Lower leg skin (tissue), 4 donors: ENCODE measurements at regions of chr22 and their contacts with region 1.

Region 1: DNA sequence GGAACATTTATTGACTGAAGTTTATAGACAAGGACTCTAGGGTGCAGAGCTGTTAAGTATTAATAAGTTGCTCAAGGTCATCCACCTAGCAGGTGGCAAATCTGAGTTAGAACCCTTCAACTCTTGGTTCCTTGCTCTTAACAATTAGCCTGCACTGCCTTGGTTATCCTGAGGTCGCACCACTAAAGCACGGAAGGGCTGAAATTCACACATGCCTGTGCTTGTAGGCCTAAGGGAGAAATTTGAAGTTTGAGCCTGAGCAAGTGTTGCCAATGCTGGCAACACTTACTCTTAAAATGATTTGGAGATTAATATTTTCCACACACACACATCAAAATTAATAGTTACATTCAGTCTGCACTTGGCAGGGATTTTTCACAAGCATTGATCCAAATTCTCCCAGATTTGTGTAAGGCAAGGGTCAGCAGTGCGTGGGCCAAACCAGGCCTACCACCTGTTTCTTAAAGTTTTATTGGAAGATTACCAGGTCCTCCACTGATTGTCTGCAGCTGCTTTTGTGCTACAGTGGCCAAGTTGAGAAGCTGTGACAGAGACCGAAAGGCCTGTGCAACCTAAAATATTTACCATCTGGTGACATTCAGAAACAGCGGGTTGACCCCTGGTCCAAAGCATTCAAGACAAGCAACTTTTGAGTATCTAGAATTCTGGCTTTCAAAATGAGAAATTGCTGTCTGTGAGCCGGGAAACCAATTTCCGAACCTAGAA is 16.3 kb downstream of the APOL5 start:
- DNase-seq: no peak
- H3K4me3 ChIP-seq: no peak overlapping the region
- CTCF ChIP-seq: no peak
- POLR2A ChIP-seq: no peak

Region 2: GRCh38 chr22:35905894-35906293 is 171.9 kb after region 1 on chr22:
- intact Hi-C with region 1: loop called (anchors 5 kb)
- DNase-seq: no peak
- H3K4me3 ChIP-seq: no peak overlapping the region
- CTCF ChIP-seq: no peak
- POLR2A ChIP-seq: no peak